ENCODE measurements at regions of chr3 and their contacts with region 1.

Region 1: DNA sequence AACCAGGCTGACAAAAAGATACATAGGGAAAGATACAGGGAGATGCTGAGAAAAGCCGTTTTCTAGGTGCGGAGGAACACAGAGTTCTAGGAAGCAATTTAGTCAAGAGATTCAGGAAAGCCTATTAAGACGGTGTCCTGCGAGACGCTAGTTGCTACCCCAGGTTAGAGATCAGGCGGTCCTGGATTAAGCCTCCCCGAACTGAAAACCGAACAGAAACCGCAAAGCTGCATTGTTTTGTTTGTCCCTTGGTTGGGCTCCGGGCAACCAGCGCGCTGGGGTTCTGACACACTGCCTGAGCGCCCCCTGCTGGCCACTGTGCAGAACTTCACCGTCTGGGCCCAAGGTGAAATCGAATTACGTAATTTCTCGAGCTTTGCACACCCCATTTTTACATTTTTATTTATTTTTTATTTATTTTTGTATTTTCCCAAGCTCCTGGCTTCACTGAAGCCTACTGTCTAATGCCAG is 37.3 kb upstream of the NDUFB4 start:
- DNase-seq: peak; percentile 97
- H3K4me3 ChIP-seq: peak overlapping the region; percentile 49 to 61 (median 54)
- H3K27ac ChIP-seq: peak overlapping the region; percentile 83 to 88 (median 85)
- H3K4me1 ChIP-seq: peaks cover 42 to 68% (median 60%) of the 10 kb centered on the region in 4 donors
- H3K27me3 ChIP-seq: no peaks in the 10 kb centered on the region
- CTCF ChIP-seq: peak; percentile 98 to 99 (median 99)
- EP300 ChIP-seq: no peak
- POLR2A ChIP-seq: no peak

Region 2: GRCh38 chr3:120245386-120245785 is 313.4 kb before region 1 on chr3:
- intact Hi-C with region 1: loop called (anchors 2 kb)
- DNase-seq: no peak
- H3K4me3 ChIP-seq: no peak overlapping the region
- H3K27ac ChIP-seq: no peak overlapping the region
- H3K4me1 ChIP-seq: no peaks in the 10 kb centered on the region
- H3K27me3 ChIP-seq: no peaks in the 10 kb centered on the region
- CTCF ChIP-seq: no peak
- EP300 ChIP-seq: no peak
- POLR2A ChIP-seq: no peak

Region 3: GRCh38 chr3:120417272-120417911 is 141.4 kb before region 1 on chr3:
- intact Hi-C with region 1: loop called (anchors 2 kb)
- DNase-seq: peak; percentile 98
- H3K4me3 ChIP-seq: peak overlapping the region; percentile 18 to 34 (median 28)
- H3K27ac ChIP-seq: peak overlapping the region; percentile 75 to 87 (median 84)
- H3K4me1 ChIP-seq: peaks cover 50 to 77% (median 73%) of the 10 kb centered on the region in 4 donors
- H3K27me3 ChIP-seq: no peaks in the 10 kb centered on the region
- CTCF ChIP-seq: peak; percentile 89 to 94 (median 90)
- EP300 ChIP-seq: no peak
- POLR2A ChIP-seq: no peak

Region 4: GRCh38 chr3:120506828-120507774 is 51.7 kb before region 1 on chr3:
- intact Hi-C with region 1: loop called (anchors 5 kb)
- DNase-seq: peak; percentile 91
- H3K4me3 ChIP-seq: peak overlapping the region in 2 of 4 donors; percentile 4 to 21
- H3K27ac ChIP-seq: peak overlapping the region in 3 of 4 donors; percentile 25 to 44 (median 40)
- H3K4me1 ChIP-seq: peaks cover 16 to 27% (median 21%) of the 10 kb centered on the region in 4 donors
- H3K27me3 ChIP-seq: no peaks in the 10 kb centered on the region
- CTCF ChIP-seq: peak; percentile 58 to 71 (median 65)
- EP300 ChIP-seq: no peak
- POLR2A ChIP-seq: no peak

Region 5: DNA sequence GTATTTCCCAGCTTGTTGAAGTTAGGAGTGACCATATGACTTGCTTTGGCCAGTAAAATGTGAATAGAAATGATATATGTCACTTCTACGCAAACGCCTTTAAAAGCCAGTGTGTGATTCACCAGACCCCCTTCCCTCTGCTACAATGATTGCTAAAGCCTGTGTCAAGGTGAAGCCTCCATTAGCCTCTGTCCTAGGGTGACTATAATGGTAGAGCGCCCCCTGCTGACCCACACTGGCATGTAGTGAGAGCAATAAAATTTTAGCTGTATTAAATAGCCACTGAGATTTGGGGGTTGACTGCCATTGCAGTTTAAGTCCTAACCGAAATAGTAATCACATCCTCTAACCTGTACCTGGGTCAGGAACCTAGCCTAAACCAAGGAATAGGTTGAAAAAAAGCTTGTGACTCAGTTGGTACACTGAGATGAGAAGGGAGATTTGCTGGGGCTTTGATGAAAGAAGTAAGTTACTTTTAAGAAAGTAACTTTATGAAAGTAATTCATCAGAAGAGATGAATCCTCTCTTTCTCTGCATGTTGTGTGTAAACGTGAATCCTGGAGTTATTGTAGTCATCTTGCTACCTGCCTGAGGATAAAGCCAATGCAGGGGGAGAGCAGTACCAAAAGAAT is 236.3 kb after region 1 on chr3:
- intact Hi-C with region 1: loop called (anchors 2 kb)
- DNase-seq: peak; percentile 95
- H3K4me3 ChIP-seq: no peak overlapping the region
- H3K27ac ChIP-seq: no peak overlapping the region
- H3K4me1 ChIP-seq: no peaks in the 10 kb centered on the region
- H3K27me3 ChIP-seq: no peaks in the 10 kb centered on the region
- CTCF ChIP-seq: peak; percentile 78 to 88 (median 82)
- EP300 ChIP-seq: no peak
- POLR2A ChIP-seq: no peak